Naive thymus-derived CD4-positive, alpha-beta T cell (primary cell): ENCODE measurements at regions of chrX and their contacts with region 1.

Region 1: DNA sequence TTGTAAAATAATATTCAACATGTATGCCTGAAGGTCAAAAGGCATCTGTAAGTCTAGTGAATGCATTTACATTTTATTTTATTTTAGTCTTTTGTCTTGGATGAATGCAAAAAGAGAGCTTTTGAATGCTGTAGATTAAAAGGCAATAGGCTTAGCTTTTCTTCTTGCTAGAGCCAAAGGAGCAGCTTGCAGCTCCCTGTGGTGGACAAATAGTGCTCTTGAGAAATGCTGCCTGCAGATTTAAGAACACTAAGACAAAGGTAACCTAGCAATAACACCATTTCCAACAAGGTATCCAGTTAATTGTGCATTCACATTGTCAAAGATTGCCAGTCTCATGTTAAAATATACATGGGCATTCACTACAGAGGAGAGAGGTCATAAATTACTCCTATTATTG is 859.2 kb upstream of the PRKX start:
- DNase-seq: no peak
- ATAC-seq: no peak
- H3K4me3 ChIP-seq: no peak overlapping the region
- H3K4me3 Mint-ChIP-seq: no peak overlapping the region
- H3K27ac ChIP-seq: no peak overlapping the region
- H3K27ac Mint-ChIP-seq: no peak overlapping the region
- H3K4me1 ChIP-seq: no peaks in the 10 kb centered on the region
- H3K4me1 Mint-ChIP-seq: no peaks in the 10 kb centered on the region
- H3K27me3 ChIP-seq: no peaks in the 10 kb centered on the region
- H3K27me3 Mint-ChIP-seq: no peaks in the 10 kb centered on the region

Region 2: DNA sequence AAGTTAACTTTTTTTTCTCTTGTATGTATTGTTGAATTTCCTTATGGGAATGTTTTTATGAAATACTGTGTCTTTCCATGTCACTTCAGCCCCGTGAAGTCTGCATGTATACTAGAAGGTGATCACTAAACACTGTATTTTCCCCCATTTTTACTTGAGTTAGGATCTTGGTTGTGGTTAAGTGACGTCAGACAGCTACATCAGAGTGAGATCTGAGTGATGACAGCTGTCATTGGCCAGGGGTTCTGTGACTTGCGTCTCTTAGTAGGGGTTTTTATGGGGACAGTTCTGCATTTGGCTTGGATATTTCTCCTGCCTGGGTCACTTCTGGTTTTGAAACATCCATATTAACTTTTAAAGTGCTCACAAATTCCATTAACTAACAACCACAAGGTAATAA is 42.9 kb before region 1 on chrX:
- CTCF ChIA-PET with region 1: no interaction called
- POLR2A ChIA-PET with region 1: no interaction called
- intact Hi-C with region 1: loop called in 1 of 2 experiments (anchors 2 kb)
- DNase-seq: no peak
- ATAC-seq: no peak
- H3K4me3 ChIP-seq: no peak overlapping the region
- H3K4me3 Mint-ChIP-seq: no peak overlapping the region
- H3K27ac ChIP-seq: no peak overlapping the region
- H3K27ac Mint-ChIP-seq: no peak overlapping the region
- H3K4me1 ChIP-seq: no peaks in the 10 kb centered on the region
- H3K4me1 Mint-ChIP-seq: no peaks in the 10 kb centered on the region
- H3K27me3 ChIP-seq: no peaks in the 10 kb centered on the region
- H3K27me3 Mint-ChIP-seq: peaks cover 0 to 4% (median 0%) of the 10 kb centered on the region in 5 donors